Ovary (tissue), 10 donors: ENCODE measurements at regions of chr6 and their contacts with region 1.

Region 1: DNA sequence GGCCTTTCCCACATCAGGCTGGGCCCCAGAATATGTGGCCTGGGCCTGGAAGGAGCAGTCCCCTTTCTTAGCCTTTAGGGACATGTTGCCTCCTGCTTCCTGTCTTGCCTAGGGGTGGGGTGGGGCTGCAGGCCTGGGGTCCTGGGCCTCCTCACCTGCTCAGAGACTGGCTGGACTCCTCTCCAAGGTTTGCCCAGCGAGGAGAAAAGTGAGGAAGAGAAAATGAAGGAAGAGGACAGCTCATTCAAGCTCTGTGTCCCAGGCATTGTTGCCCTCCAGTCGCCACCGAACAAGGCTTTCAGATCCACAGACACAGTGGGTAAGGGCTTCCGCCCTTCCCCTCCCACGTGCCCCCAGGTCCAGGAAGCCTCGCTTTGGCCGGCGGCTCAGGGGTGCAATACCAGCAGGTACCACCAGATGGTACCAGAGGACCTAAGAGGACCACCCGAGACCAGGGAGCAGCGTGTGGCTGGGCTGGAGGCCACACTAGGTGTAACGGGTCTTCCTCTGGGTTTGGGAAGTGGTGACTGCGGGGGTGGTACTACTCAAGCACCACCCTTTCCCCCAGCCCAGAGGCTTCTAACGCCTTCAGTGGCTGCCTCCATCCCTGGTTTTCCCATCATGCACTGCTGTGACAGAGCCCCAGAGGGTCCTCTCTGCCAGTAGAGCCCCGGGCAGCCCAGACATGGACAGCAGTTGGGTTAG is 5.5 kb upstream of the BAK1 start:
- DNase-seq: peak; percentile 82 to 90 (median 87)
- H3K4me3 ChIP-seq: no peak overlapping the region
- H3K27ac ChIP-seq: no peak overlapping the region
- H3K4me1 ChIP-seq: peaks cover 13% of the 10 kb centered on the region
- H3K27me3 ChIP-seq: no peaks in the 10 kb centered on the region
- CTCF ChIP-seq: peak; percentile 95 to 99 (median 96)
- EP300 ChIP-seq: no peak
- POLR2A ChIP-seq: no peak

Region 2: DNA sequence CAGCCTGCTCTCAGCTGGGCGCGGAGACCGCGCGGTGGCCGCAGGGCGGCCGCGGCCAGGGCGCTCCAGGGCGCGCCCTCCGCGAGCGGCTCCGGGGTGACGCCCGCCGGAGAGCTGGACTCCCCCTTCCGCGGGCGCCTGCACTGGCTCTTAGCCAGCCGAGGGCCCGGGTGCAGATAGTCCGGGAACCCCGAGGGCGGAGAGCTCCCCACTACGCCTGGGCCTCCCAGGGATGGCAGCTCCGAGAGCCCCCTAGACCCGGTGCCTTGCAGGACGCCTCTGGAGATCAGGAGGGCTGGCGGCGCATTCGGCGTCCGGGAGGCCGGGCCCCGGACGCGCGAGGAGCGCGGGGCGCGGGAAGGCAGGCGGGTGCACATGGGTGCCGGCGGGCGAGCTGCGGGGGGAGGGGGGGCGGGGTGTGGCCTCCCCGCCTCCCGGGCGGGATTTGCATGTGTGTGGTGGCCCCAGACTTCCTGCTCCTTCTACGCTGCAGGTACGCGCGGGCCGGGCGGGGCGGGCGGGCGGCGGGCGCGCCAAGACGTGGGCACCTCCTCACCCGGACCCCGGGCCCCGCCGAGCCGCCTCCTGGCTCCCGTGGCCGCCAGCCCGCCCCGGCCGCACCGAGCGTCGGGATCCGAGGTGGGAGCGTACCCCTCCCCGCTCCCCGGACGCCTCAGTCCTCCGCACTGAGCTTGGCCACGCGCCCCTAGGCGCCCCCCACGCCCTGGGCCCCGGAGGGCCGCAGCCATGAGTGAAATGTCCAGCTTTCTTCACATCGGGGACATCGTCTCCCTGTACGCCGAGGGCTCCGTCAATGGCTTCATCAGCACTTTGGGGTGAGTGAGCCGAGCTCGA is 35.5 kb after region 1 on chr6 and contains the start of gene ITPR3:
- intact Hi-C with region 1: loop called in 1 of 4 experiments (anchors 5 kb)
- DNase-seq: peak; percentile 44 to 71 (median 54)
- H3K4me3 ChIP-seq: peak within 1 kb of the TSS; percentile 51
- H3K27ac ChIP-seq: peak within 1 kb of the TSS; percentile 52 to 62
- H3K4me1 ChIP-seq: no peaks in the 10 kb centered on the region
- H3K27me3 ChIP-seq: no peaks in the 10 kb centered on the region
- CTCF ChIP-seq: no peak
- EP300 ChIP-seq: no peak
- POLR2A ChIP-seq: no peak
- total RNA-seq, gene ITPR3: 3.7 to 31.1 (median 20.1) TPM

Region 3: DNA sequence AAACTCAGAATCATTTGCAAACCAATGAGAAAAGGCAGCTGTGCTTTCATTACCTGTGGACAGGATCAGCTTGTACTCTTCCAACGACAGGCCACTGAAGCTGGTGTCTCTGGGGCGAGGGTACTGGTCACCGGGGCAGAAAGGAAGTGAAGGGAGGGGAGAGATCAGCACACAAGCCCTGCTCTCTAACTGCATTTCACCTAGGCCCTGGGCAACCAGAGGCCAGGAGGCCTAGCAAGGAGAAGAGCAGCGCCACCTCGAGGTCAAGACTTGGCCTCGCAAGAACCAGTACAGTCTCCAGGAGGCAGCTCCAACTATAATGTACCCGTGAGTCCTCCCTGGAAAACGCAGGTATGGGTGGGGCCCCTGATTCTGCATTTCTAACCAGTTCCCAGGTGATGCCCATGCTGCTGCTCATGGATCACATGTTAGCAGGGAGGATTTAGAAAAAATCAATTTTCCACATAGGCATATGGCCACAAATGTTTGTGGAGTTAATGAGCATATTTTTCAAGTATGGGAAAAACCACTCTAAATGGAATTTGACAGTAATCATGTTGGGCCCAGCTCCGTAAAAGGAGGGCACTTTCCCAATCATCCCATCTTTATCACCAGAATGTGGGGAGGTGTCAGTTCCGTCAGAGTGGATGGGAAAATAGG is 115.0 kb after region 1 on chr6:
- intact Hi-C with region 1: loop called (anchors 5 to 10 kb)
- DNase-seq: peak in 4 of 5 donors; percentile 53 to 74 (median 63)
- H3K4me3 ChIP-seq: no peak overlapping the region
- H3K27ac ChIP-seq: peak overlapping the region in 1 of 2 donors; percentile 64
- H3K4me1 ChIP-seq: peaks cover 10% of the 10 kb centered on the region
- H3K27me3 ChIP-seq: no peaks in the 10 kb centered on the region
- CTCF ChIP-seq: peak in 2 of 3 donors; percentile 18 to 33
- EP300 ChIP-seq: no peak
- POLR2A ChIP-seq: no peak

Region 4: GRCh38 chr6:34745277-34746103 is 1159.9 kb after region 1 on chr6:
- intact Hi-C with region 1: no loop called
- DNase-seq: no peak
- H3K4me3 ChIP-seq: no peak overlapping the region
- H3K27ac ChIP-seq: no peak overlapping the region
- H3K4me1 ChIP-seq: no peaks in the 10 kb centered on the region
- H3K27me3 ChIP-seq: no peaks in the 10 kb centered on the region
- CTCF ChIP-seq: no peak
- EP300 ChIP-seq: no peak
- POLR2A ChIP-seq: no peak